ENCODE measurements at regions of chr1 and their contacts with region 1.

Region 1: GRCh38 chr1:174262349-174263241 is 103.3 kb downstream of the RABGAP1L start:
- DNase-seq: no peak
- H3K4me3 ChIP-seq: no peak overlapping the region
- H3K27ac ChIP-seq: no peak overlapping the region
- H3K4me1 ChIP-seq: no peaks in the 10 kb centered on the region
- H3K27me3 ChIP-seq: no peaks in the 10 kb centered on the region
- CTCF ChIP-seq: peak; percentile 21 to 65 (median 24)
- POLR2A ChIP-seq: no peak

Region 2: DNA sequence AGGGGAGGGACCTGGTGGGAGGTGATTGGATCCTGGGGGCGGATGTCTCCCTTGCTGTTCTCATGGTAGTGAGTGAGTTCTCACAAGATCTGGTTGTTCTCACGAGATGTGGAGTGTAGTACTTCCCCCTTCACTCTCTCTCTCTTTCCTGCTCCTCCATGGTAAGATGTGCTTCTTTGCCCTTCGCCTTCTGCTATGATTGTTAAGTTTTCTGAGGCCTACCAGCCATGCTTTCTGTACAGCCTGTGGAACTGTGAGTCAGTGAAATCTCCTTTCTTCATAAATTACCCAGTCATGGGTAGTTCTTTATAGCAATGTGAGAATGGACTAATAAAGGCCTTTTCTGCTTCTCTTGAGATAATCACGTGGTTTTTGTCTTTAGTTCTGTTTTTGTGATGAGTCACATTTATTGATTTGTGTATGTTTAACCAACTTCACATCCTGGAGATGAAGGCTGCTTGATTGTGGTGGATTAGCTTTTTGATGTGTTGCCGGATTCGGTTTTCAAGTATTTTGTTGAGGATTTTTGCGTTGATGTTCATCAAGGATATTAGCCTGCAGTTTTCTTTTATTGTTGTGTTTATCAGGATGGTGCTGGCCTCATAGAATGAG is 57.8 kb before region 1 on chr1:
- intact Hi-C with region 1: no loop called
- DNase-seq: no peak
- H3K4me3 ChIP-seq: no peak overlapping the region
- H3K27ac ChIP-seq: no peak overlapping the region
- H3K4me1 ChIP-seq: no peaks in the 10 kb centered on the region
- H3K27me3 ChIP-seq: no peaks in the 10 kb centered on the region
- CTCF ChIP-seq: no peak
- POLR2A ChIP-seq: no peak

Region 3: GRCh38 chr1:174314433-174314832 is 51.8 kb after region 1 on chr1:
- intact Hi-C with region 1: no loop called
- DNase-seq: no peak
- H3K4me3 ChIP-seq: no peak overlapping the region
- H3K27ac ChIP-seq: no peak overlapping the region
- H3K4me1 ChIP-seq: no peaks in the 10 kb centered on the region
- H3K27me3 ChIP-seq: no peaks in the 10 kb centered on the region
- CTCF ChIP-seq: no peak
- POLR2A ChIP-seq: no peak

Region 4: DNA sequence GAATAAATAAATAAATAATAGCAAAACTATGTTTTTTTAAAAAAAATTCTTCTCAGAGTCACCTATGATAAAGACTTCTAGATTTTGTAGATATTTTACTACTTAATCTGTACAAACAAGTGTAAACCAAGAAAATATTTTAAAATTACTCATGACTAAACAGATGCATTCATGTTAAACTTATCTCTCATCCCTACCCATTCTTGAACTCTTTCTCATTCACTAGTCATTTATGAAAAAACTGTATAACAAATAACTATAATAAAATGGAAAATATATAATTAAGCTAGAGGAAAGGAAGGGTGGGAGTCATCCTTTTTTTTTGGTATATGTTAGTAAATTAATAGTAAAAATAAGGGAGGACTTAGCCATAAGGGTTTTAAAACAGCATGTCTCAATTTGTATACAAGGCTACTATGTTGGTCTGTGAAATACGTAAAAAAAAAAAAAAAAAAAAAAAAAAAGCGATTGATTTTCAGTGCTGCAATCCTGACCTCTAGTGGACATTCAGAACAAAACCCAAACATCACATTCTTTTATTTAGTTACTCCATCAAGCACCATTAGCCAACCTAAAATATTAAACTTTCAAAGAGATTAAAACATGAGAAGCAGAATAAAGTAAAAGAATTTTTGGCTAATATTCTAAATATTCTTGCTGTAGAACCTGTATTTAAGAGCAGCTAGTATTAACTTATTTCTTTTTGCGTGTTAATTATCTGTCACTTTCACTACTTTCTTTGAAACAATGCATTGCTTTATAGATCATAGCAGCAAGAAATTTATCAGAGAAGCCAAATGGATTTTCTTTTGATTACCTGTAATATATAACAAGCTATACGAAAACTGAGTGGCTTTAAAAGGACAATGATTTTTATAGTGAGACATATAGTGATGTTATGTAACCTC is 481.3 kb after region 1 on chr1:
- intact Hi-C with region 1: loop called (anchors 10 kb)
- DNase-seq: no peak
- H3K4me3 ChIP-seq: no peak overlapping the region
- H3K27ac ChIP-seq: no peak overlapping the region
- H3K4me1 ChIP-seq: no peaks in the 10 kb centered on the region
- H3K27me3 ChIP-seq: no peaks in the 10 kb centered on the region
- CTCF ChIP-seq: peak in 2 of 3 experiments; percentile 31 to 35
- POLR2A ChIP-seq: no peak

Measured in vagina (tissue), 2 donors.